ENCODE measurements at regions of chr1 and their contacts with region 1.

Region 1: DNA sequence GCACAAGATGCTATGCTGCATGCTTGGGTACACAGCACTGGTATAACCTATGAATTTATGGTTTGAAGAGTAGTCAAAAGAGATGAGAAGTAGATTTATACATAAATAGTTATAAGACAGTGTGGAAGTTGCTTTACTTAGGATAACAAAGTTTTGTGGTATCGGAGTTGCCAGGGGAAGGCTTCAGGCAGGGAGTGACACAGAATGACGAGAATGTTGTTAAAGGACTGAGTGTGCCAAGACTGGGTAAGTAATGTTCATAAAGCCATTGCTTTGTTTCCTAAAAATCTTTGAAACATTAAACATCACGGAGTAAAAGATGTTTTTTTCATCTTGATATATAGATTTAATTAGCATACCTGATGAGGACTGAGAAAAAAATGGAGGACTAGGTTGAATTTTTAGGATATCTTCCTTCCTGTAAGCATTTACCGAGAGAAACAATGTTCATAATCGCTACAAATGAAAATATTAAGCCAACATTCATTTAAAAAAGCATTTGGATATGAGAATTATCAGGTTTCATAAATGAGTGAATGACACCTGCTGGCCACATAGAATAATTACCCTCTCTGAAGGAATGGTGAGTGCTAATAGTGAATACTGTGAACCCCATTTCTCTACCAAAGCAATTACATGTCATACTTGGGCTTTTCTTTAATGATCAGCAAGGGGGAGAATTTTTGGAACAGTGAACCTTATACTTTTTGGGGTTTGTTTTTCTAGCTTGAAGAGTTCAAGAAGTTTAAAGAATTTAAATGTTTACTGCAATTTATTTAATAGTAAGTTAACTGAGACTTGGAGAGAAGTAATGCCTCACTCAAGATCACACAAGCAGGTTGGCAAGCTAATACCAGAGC is 28.4 kb downstream of the EXTL2 start:
- DNase-seq: no peak
- H3K4me3 Mint-ChIP-seq: no peak overlapping the region
- H3K27ac Mint-ChIP-seq: no peak overlapping the region
- H3K4me1 Mint-ChIP-seq: no peaks in the 10 kb centered on the region
- H3K27me3 Mint-ChIP-seq: no peaks in the 10 kb centered on the region
- CTCF ChIP-seq: peak; percentile 19

Region 2: GRCh38 chr1:100543640-100544039 is 322.6 kb before region 1 on chr1:
- CTCF ChIA-PET with region 1: no interaction called
- intact Hi-C with region 1: loop called (anchors 5 kb)
- DNase-seq: peak; percentile 19
- H3K4me3 Mint-ChIP-seq: no peak overlapping the region
- H3K27ac Mint-ChIP-seq: no peak overlapping the region
- H3K4me1 Mint-ChIP-seq: no peaks in the 10 kb centered on the region
- H3K27me3 Mint-ChIP-seq: peaks cover 5% of the 10 kb centered on the region
- CTCF ChIP-seq: no peak

Region 3: DNA sequence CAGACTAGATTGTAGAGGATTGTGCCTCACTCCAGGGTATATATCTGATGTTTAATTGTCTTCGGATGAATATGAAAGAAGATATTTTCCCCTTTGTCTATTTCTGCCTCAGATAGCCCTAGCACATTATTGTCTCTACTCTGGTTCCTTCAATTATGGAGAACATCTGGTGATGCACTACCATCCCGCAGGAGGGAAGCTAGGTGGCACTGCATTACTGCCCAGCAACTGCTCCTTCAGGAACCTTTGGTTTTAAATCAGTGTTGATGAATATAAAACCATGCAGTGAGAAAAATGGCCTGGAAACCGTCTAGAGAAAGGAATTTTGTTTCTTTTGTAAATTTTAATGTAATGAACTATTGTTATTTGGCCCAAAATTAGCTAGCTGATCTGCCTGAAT is 259.8 kb before region 1 on chr1:
- CTCF ChIA-PET with region 1: interaction called, 10 read pairs
- intact Hi-C with region 1: loop called (anchors 1 kb)
- DNase-seq: peak; percentile 40
- H3K4me3 Mint-ChIP-seq: no peak overlapping the region
- H3K27ac Mint-ChIP-seq: no peak overlapping the region
- H3K4me1 Mint-ChIP-seq: no peaks in the 10 kb centered on the region
- H3K27me3 Mint-ChIP-seq: no peaks in the 10 kb centered on the region
- CTCF ChIP-seq: no peak

Measured in Calu3 (cell line).